Natural killer cell (primary cell): ENCODE measurements at regions of chr3 and their contacts with region 1.

Region 1: DNA sequence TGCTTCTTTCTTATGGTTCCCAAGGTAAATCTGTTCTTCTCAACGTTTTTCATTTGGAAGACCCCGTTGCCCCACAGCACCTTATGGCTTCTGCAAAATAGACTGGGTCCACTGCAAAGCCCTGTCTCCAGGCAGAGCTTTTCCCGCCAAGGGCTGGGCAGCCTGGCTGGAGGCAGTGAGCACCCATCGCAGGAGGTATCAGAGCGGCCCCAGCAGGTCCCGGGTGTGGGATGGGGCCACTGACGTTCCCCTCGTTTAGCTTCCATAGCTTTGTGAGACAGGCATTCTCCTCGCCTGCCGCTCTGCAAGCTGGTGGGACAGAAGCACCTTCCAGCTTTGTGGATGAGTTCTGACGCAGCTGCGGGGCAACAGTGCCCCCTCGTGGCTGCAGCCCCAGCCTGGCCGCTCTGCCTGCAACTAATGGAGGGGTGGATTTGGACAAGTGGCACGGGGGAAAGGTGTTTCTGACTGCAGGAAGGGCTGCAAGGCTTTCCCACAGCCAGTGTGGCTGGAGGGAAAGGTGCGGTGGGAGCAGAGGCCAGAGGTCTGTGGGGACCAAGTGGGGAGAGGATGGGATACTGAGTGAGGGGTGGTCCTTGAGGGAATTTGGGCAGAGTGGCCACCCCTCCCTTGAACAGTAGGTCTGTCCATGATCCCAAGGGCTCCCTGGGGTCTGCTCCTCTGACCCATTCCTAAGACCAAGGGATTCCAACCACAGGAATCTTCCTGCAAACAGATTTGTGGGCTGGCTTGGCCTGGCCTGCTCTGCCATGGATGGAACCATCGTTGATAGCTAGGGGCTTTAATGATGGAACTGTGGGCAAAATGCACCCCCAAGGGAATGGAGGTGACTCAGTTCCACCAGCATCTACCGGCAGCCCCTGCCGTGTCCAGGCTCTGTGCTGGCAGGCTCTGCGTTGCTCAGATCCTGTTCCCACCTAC is 99.4 kb downstream of the FBLN2 start:
- DNase-seq: peak; percentile 72 to 88
- ATAC-seq: peak; percentile 54 to 66 (median 57)
- H3K4me3 ChIP-seq: no peak overlapping the region
- H3K4me3 Mint-ChIP-seq: no peak overlapping the region
- H3K27ac ChIP-seq: no peak overlapping the region
- H3K27ac Mint-ChIP-seq: peak overlapping the region in 1 of 2 donors; percentile 16
- H3K4me1 ChIP-seq: peaks cover 37% of the 10 kb centered on the region
- H3K4me1 Mint-ChIP-seq: peaks cover 12 to 25% of the 10 kb centered on the region in 2 donors
- H3K27me3 ChIP-seq: peaks cover 2% of the 10 kb centered on the region
- H3K27me3 Mint-ChIP-seq: peaks cover 19 to 30% of the 10 kb centered on the region in 2 donors
- CTCF ChIP-seq: peak; percentile 95

Region 2: DNA sequence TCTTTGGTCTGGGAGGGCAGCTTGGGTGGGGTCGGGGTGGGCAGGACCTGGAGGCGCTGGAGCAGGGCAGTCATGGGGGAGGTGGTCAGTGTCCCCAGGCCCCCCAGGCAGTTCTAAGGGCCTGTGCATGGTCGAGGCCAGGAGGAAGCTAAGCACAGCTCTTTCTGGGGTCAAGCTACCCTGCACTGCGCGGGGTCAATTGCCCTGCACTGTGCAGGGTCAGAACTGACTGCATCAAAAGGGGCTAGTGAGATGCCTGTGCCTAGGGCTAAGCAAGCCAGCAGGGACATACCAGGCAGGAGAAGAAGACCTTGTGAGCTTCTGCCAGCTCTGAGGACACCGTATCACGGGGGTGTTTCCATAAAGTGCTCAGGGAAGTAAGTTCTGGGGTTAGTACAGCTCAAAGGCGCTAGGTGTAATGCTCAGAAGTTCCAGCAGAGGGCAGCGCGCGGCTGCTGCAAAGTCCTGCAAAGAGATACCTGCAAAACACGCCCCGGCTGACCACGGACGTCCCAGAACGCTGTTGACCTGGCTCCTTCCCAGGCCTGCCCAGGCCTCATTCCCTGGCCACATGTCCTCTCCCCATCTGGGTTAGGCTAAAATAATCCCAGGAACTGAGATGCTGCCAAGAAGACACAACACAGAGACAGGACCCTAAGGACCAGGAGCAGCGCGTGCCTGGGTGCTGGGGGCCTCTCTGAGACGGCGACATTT is 556.3 kb before region 1 on chr3:
- intact Hi-C with region 1: loop called (anchors 1 kb)
- DNase-seq: peak; percentile 81 to 88
- ATAC-seq: peak; percentile 78 to 98 (median 95)
- H3K4me3 ChIP-seq: no peak overlapping the region
- H3K4me3 Mint-ChIP-seq: no peak overlapping the region
- H3K27ac ChIP-seq: no peak overlapping the region
- H3K27ac Mint-ChIP-seq: no peak overlapping the region
- H3K4me1 ChIP-seq: peaks cover 10% of the 10 kb centered on the region
- H3K4me1 Mint-ChIP-seq: peaks cover 3 to 14% of the 10 kb centered on the region in 2 donors
- H3K27me3 ChIP-seq: no peaks in the 10 kb centered on the region
- H3K27me3 Mint-ChIP-seq: peaks cover 7 to 13% of the 10 kb centered on the region in 2 donors
- CTCF ChIP-seq: peak; percentile 89

Region 3: GRCh38 chr3:13495921-13496723 is 152.2 kb before region 1 on chr3:
- intact Hi-C with region 1: loop called (anchors 1 kb)
- DNase-seq: peak; percentile 66 to 83
- ATAC-seq: peak; percentile 83 to 98 (median 93)
- H3K4me3 ChIP-seq: no peak overlapping the region
- H3K4me3 Mint-ChIP-seq: no peak overlapping the region
- H3K27ac ChIP-seq: no peak overlapping the region
- H3K27ac Mint-ChIP-seq: no peak overlapping the region
- H3K4me1 ChIP-seq: peaks cover 48% of the 10 kb centered on the region
- H3K4me1 Mint-ChIP-seq: peaks cover 13 to 41% of the 10 kb centered on the region in 2 donors
- H3K27me3 ChIP-seq: no peaks in the 10 kb centered on the region
- H3K27me3 Mint-ChIP-seq: no peaks in the 10 kb centered on the region
- CTCF ChIP-seq: peak; percentile 86

Region 4: GRCh38 chr3:13518516-13518953 is 129.8 kb before region 1 on chr3:
- intact Hi-C with region 1: no loop called
- DNase-seq: no peak
- ATAC-seq: no peak
- H3K4me3 ChIP-seq: no peak overlapping the region
- H3K4me3 Mint-ChIP-seq: no peak overlapping the region
- H3K27ac ChIP-seq: no peak overlapping the region
- H3K27ac Mint-ChIP-seq: no peak overlapping the region
- H3K4me1 ChIP-seq: no peaks in the 10 kb centered on the region
- H3K4me1 Mint-ChIP-seq: no peaks in the 10 kb centered on the region
- H3K27me3 ChIP-seq: no peaks in the 10 kb centered on the region
- H3K27me3 Mint-ChIP-seq: peaks cover 0 to 4% of the 10 kb centered on the region in 2 donors
- CTCF ChIP-seq: no peak